ENCODE measurements at regions of chr1 and their contacts with region 1.

Region 1: DNA sequence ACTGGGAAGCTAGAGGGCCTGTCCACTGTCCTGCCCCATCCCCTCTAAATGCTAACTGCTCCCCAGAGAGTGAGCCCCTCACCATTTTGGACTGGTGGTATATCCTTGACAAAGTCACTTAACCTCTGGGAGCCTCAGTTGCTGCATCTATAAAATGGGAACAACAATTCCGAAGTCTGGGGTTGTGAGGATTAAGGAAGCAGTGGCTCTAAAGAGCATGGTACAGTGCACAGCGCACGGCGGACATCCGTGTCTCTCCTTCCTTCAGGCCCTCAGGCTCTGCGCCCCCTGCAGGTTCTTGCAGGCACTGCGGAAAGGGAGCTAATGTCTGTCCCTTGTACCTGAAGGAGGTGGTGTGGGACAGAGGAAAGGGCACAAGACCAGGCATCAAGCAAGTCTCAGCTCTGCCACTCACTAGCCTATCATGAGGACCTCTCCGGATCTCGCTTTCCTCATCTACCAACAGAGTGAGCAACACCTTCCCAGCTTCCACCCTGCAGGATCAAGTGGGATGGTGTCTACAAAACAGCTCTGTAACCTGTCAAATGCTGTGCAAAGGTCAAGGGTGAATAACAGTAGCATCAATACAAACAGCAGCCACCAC is 20.1 kb downstream of the ECE1 start:
- DNase-seq: peak; percentile 77
- ATAC-seq: peak; percentile 95
- H3K4me3 Mint-ChIP-seq: no peak overlapping the region
- H3K27ac Mint-ChIP-seq: peak overlapping the region; percentile 5
- H3K4me1 Mint-ChIP-seq: peaks cover 15% of the 10 kb centered on the region
- H3K27me3 Mint-ChIP-seq: no peaks in the 10 kb centered on the region
- CTCF ChIP-seq: no peak

Region 2: DNA sequence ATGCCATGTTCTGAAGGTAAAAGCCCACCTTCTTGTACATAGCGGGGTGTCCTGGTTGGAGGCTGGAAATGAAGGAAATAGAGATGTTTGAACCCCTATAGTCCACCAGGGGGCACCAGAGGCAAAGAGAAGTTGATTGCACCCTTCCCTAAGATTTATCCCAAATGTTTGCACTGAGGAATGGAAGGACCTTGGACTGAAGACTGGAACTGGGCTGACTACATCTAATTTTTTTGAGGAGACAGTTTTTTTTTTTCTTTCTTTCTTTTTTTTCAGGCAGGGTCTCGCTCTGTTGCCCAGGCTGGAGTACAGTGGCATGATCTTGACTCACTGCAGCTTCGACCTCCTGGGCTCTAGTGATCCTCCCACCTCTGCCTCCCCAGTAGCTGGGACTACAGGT is 38.1 kb before region 1 on chr1:
- CTCF ChIA-PET with region 1: interaction called, 14 read pairs
- POLR2A ChIA-PET with region 1: no interaction called
- intact Hi-C with region 1: loop called (anchors 1 kb)
- DNase-seq: no peak
- ATAC-seq: peak; percentile 72
- H3K4me3 Mint-ChIP-seq: no peak overlapping the region
- H3K27ac Mint-ChIP-seq: no peak overlapping the region
- H3K4me1 Mint-ChIP-seq: no peaks in the 10 kb centered on the region
- H3K27me3 Mint-ChIP-seq: no peaks in the 10 kb centered on the region
- CTCF ChIP-seq: peak; percentile 43

Region 3: DNA sequence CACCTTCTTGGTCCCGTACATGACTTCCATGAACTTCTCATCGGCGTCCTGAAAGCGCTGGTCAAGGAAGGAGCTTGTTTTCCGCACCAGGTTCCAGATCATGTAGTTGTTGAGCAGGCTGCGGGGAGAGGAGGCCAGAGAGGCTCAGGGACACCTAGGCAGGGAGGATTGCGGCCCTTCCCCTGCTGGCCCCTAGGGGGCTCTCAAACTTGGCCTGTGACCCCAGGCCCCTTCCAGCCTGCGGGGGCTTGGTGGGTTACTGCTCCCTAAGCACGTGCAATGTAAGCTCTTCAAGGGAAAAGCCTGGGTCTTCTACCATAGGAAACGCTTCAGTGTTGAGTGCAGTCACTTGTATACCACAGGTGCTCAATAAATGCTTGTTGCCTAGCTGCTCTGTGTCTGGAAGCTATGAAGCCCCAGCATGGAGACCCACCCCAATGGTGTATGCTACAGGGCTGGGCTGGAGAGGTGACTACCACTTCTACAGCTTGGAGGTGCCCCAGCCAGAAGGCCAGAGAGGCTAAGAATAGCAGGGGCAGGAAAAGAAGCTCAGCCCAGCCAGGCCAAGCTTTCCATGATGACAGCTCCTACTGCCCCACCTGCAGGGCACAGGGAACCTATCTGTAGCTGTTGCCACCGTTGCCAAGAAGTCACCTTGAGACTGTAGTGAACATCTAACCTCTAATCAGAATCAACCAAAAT is 25.1 kb before region 1 on chr1:
- CTCF ChIA-PET with region 1: interaction called, 16 read pairs
- POLR2A ChIA-PET with region 1: no interaction called
- intact Hi-C with region 1: no loop called
- DNase-seq: no peak
- ATAC-seq: peak; percentile 28
- H3K4me3 Mint-ChIP-seq: no peak overlapping the region
- H3K27ac Mint-ChIP-seq: no peak overlapping the region
- H3K4me1 Mint-ChIP-seq: no peaks in the 10 kb centered on the region
- H3K27me3 Mint-ChIP-seq: no peaks in the 10 kb centered on the region
- CTCF ChIP-seq: no peak

Region 4: DNA sequence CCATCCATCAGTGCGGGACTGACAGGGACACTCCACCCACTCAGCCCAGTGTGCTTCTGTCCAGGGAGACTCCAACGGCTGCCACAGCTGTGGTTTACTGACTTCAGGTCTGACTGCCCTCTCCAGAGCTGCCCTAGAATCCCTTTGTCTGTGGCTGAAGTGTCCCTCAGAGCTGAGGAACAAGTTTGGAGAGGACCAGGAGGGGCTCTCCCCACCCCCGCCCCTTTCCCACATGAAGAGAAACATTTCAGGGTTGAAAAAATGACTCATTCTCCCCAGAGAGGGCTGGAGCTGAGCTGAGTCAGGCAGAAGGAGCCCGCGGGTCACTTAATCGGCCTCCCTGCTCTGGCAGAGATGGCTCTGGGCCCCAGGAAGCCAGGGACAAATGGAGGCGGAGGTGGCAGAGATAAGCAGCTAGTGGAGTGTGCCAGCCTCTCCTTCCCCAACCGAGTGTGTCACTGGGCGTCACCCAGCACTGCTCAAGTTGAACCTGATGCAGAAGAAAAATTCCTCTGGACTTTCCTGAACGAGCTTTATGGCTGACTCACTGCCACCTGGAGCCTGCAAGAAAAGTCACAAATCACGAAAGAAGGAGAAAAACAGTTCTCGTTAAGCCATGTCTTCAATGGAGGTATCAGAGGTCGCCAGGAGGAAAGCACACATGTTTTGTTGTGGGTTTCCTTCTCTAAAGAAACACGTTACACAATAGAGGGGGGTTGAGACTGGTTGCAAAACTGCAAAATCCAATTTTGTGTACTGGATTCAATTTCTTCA is 54.4 kb after region 1 on chr1:
- CTCF ChIA-PET with region 1: interaction called, 22 read pairs
- POLR2A ChIA-PET with region 1: interaction called, 6 read pairs
- intact Hi-C with region 1: no loop called
- DNase-seq: peak; percentile 51
- ATAC-seq: peak; percentile 71
- H3K4me3 Mint-ChIP-seq: peak overlapping the region; percentile 72
- H3K27ac Mint-ChIP-seq: peak overlapping the region; percentile 90
- H3K4me1 Mint-ChIP-seq: peaks cover 87% of the 10 kb centered on the region
- H3K27me3 Mint-ChIP-seq: no peaks in the 10 kb centered on the region
- CTCF ChIP-seq: no peak

Region 5: DNA sequence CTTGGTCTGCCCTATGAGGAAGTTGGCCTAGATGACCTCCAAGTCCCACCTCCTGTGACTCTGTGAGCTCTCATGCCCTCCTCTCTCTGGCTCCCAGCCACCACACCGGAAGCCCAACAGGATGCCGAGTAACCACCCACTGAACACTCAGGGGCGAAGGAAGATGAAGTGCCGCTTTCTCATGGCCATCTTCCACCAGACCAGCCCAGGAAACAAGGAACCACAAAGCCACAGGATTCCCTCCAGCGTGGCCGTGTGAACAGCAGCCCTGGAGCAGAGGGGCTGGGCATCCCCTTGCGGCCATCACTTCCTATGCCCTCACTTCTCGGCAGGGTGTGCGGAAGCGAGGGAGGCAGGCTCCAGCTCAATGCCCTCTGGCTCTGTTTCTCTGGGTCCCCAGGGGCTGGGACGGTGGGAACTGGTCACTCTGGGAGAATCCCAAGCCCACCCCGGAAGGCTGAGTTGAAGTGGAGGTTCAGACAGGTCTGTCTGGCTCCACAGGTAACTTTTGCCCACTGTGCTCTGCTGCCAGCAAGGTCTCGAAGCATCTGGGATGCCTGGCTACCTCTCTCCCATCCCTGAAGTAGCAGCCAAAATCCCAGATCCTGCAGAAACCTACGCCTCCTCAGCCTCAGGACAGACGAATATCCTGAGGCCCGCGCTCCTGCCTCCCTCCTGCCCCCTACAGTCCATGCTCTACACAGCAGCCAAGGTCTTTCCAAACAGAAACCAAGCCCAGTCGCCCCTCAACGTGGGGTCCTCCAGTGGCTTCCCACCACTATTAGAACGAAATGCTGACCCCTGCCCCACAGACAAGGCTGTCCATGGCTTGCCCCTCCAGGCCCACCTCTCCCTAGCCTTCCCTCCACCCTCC is 64.3 kb after region 1 on chr1:
- CTCF ChIA-PET with region 1: interaction called, 25 read pairs
- POLR2A ChIA-PET with region 1: interaction called, 5 read pairs
- intact Hi-C with region 1: loop called (anchors 1 kb)
- DNase-seq: peak; percentile 67
- ATAC-seq: peak; percentile 83
- H3K4me3 Mint-ChIP-seq: peak overlapping the region; percentile 87
- H3K27ac Mint-ChIP-seq: peak overlapping the region; percentile 94
- H3K4me1 Mint-ChIP-seq: peaks cover 89% of the 10 kb centered on the region
- H3K27me3 Mint-ChIP-seq: no peaks in the 10 kb centered on the region
- CTCF ChIP-seq: no peak

Region 6: DNA sequence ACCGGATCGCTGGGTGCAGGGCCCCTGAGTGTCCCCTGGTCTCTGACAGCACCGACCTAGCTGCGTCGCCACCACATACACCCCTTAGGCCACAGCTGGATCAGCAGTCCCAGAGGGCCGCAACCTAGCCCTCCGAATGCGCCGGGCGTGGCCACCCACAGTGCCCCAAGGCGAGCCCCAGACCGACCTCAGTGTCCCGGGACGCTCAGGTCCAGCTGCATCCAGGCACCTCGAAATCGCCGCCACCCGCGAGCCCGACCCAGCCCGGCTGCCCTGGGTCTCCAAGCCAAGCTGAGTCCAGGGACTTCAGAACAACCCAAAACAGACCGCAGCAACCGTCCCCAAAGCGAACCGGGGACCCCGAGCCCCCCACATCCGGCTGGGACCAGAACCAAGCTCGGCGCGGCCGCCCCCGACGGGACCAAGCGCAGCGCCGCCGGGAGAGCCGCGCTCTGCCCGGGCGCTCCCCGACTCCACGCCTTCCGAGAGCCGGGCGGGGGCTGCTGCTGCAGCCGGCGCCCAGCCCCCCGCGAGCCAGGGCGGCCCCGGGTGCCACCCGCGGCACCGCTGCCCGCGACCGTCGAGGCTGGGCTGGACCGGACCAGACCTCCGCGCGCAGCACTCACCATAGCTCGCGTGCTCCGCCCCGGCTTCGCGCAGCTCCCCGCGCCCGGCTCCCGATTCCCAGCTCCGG is 74.7 kb after region 1 on chr1:
- CTCF ChIA-PET with region 1: interaction called, 13 read pairs
- POLR2A ChIA-PET with region 1: interaction called, 7 read pairs
- intact Hi-C with region 1: no loop called
- DNase-seq: peak; percentile 36
- ATAC-seq: peak; percentile 22
- H3K4me3 Mint-ChIP-seq: peak overlapping the region; percentile 92
- H3K27ac Mint-ChIP-seq: peak overlapping the region; percentile 77
- H3K4me1 Mint-ChIP-seq: peaks cover 43% of the 10 kb centered on the region
- H3K27me3 Mint-ChIP-seq: no peaks in the 10 kb centered on the region
- CTCF ChIP-seq: no peak

Measured in activated B cell treated with CpG ODN at 0.5 μM for 24 hours (primary cell).